ENCODE measurements at regions of chr9 and their contacts with region 1.

Region 1: GRCh38 chr9:21709464-21710058 is 92.9 kb upstream of the MTAP start:
- DNase-seq: no peak
- ATAC-seq: peak; percentile 68
- H3K4me3 Mint-ChIP-seq: no peak overlapping the region
- H3K27ac Mint-ChIP-seq: no peak overlapping the region
- H3K4me1 Mint-ChIP-seq: no peaks in the 10 kb centered on the region
- H3K27me3 Mint-ChIP-seq: peaks cover 16% of the 10 kb centered on the region
- CTCF ChIP-seq: peak; percentile 48

Region 2: DNA sequence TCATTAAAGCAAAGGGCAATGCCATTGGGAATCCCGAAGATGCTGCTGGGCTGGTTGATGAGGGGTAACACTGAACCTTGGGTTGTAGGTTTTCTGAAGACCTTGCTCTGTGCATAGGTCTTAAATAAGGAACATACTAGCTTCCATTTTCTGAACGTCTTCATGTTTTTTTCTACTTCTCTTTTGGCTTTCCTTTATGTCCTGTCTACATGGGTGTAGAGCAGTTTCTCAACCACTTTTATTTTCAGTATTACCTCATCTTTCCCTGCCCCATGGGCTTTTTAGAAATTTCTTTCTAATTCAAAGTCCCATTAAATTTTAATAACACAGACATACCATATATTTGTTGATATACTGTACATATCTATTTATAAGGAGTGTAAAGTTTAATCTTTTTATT is 469.6 kb before region 1 on chr9 and contains the start of gene IFNA14:
- CTCF ChIA-PET with region 1: no interaction called
- POLR2A ChIA-PET with region 1: no interaction called
- intact Hi-C with region 1: loop called (anchors 10 kb)
- DNase-seq: no peak
- ATAC-seq: no peak
- H3K4me3 Mint-ChIP-seq: no peak within 1 kb of the TSS
- H3K27ac Mint-ChIP-seq: no peak within 1 kb of the TSS
- H3K4me1 Mint-ChIP-seq: peaks cover 6% of the 10 kb centered on the region
- H3K27me3 Mint-ChIP-seq: peaks cover 6% of the 10 kb centered on the region
- CTCF ChIP-seq: no peak
- total RNA-seq, gene IFNA14: not detected in 2 replicates

Region 3: DNA sequence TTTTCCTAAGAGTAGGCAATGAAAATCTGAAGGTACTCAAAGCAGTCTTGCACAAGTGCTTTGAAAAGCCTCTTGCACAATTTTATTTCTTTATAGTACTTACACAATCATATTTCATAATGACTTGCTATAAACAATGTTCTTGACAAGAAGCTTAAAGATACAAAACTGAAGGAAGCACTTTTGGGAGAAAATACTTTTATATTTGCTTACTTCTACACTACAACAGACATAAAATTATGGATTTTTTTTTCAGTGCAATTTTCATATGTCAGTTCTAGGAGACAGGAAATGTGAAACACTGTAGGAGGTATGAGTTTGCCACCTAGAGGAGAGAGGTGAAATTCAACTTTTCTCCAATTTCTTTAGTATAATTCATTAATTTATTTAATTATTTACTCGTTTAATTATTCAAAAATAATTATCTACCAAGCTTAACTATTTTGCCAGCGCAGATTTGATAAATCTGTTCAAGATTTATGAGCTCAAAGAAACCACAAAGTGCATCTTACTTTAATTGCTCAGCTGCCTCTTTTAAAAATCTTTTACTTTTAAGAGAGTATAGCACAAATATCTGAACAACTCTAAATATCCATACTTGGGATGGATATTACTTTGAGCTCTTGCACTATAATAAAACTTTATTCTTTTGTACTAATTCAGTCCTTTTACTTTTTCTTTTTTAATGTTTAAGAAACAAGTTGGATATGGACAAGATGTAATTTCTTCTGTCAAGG is 328.6 kb after region 1 on chr9:
- CTCF ChIA-PET with region 1: interaction called, 3 read pairs
- POLR2A ChIA-PET with region 1: interaction called, 6 read pairs
- intact Hi-C with region 1: loop called (anchors 1 kb)
- DNase-seq: no peak
- ATAC-seq: no peak
- H3K4me3 Mint-ChIP-seq: no peak overlapping the region
- H3K27ac Mint-ChIP-seq: no peak overlapping the region
- H3K4me1 Mint-ChIP-seq: no peaks in the 10 kb centered on the region
- H3K27me3 Mint-ChIP-seq: no peaks in the 10 kb centered on the region
- CTCF ChIP-seq: no peak